Left ventricle myocardium inferior (tissue), 1 donor: ENCODE measurements at regions of chr3 and their contacts with region 1.

Region 1: DNA sequence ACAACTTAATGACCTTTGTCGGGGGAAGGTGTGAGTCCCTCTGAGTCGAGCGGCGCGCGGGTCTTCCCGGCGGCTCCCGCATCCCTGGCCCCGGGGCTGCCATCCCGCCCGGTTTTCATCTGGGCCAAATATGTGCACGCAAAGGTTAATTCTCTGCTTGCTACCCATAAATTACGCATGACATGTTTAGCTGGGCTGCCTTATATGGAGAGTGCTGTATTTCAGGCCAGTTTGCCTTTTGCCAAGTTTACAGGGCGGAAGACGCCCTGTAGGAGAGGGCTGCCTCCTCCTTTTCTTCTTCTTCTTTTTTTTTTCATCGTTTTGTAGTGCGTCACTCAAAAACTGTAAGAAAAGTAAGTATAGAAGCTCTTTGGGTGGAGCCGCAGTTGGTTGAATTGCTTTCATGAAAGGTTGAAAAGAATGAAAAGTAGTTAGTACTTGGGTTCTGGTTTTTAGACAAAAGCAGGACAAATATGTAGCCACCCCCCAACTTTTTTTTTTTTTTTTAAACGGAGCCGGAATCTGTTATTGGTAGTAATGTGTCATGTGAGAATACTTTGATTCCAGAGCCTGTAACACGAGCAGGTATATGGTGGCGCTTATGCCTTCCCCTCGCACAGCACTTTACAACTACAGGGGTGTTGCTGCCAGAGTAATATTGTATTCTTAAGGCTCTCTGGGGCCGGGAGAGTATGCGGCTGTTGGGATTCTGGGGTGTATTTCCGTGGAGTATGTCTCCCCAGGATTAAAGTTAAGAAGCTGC is 878 bp downstream of the MBNL1 start:
- DNase-seq: no peak
- H3K4me3 ChIP-seq: peak overlapping the region; percentile 90
- H3K27ac ChIP-seq: peak overlapping the region; percentile 99
- H3K4me1 ChIP-seq: peaks cover 88% of the 10 kb centered on the region
- H3K27me3 ChIP-seq: no peaks in the 10 kb centered on the region
- CTCF ChIP-seq: no peak

Region 2: GRCh38 chr3:152100491-152101132 is 169.0 kb before region 1 on chr3:
- intact Hi-C with region 1: no loop called
- DNase-seq: no peak
- H3K4me3 ChIP-seq: no peak overlapping the region
- H3K27ac ChIP-seq: no peak overlapping the region
- H3K4me1 ChIP-seq: no peaks in the 10 kb centered on the region
- H3K27me3 ChIP-seq: no peaks in the 10 kb centered on the region
- CTCF ChIP-seq: no peak

Region 3: GRCh38 chr3:152121292-152121654 is 148.3 kb before region 1 on chr3:
- intact Hi-C with region 1: no loop called
- DNase-seq: no peak
- H3K4me3 ChIP-seq: no peak overlapping the region
- H3K27ac ChIP-seq: peak overlapping the region; percentile 15
- H3K4me1 ChIP-seq: no peaks in the 10 kb centered on the region
- H3K27me3 ChIP-seq: no peaks in the 10 kb centered on the region
- CTCF ChIP-seq: no peak

Region 4: GRCh38 chr3:152159328-152159727 is 110.3 kb before region 1 on chr3:
- intact Hi-C with region 1: no loop called
- DNase-seq: no peak
- H3K4me3 ChIP-seq: no peak overlapping the region
- H3K27ac ChIP-seq: no peak overlapping the region
- H3K4me1 ChIP-seq: no peaks in the 10 kb centered on the region
- H3K27me3 ChIP-seq: no peaks in the 10 kb centered on the region
- CTCF ChIP-seq: no peak

Region 5: DNA sequence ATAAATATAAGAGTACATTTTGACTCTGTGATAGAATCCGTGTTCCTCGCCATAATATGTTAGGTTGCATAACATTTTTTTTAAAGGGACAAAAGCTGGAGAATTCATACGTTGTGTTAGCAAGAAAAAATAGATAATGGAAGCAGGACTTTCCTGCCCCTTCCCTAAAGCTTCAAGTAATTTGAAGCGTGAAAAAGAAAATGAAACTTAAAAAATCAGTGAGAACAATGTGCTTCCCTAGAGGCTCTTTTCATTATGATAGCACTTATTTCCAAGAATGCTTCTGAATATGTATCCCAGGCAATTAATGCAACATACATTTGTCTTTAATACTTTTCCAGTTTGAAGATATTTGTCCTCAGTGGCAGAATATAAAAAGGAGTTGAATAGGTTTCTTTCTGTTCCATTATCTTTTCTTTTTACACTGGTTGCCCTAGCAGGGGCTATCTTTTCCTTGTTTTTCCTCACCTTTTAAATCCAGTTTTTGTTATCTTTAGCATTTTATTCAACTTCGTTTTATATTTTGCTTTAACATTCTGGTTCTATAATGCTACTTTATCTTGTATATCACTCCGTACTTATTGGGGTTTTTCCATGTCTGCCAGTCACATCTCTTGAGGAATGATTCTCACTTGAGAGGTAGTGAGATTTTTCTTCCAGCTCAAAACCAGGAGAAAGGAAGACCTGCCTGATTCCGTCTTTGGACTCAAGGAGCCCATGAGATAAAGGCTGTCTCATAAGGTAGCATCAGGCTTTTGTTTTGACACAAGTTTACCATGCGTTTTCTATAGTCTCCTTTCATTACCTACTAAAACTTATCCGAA is 112.9 kb after region 1 on chr3:
- intact Hi-C with region 1: loop called (anchors 10 kb)
- DNase-seq: no peak
- H3K4me3 ChIP-seq: peak overlapping the region; percentile 53
- H3K27ac ChIP-seq: peak overlapping the region; percentile 77
- H3K4me1 ChIP-seq: peaks cover 98% of the 10 kb centered on the region
- H3K27me3 ChIP-seq: no peaks in the 10 kb centered on the region
- CTCF ChIP-seq: no peak

Region 6: DNA sequence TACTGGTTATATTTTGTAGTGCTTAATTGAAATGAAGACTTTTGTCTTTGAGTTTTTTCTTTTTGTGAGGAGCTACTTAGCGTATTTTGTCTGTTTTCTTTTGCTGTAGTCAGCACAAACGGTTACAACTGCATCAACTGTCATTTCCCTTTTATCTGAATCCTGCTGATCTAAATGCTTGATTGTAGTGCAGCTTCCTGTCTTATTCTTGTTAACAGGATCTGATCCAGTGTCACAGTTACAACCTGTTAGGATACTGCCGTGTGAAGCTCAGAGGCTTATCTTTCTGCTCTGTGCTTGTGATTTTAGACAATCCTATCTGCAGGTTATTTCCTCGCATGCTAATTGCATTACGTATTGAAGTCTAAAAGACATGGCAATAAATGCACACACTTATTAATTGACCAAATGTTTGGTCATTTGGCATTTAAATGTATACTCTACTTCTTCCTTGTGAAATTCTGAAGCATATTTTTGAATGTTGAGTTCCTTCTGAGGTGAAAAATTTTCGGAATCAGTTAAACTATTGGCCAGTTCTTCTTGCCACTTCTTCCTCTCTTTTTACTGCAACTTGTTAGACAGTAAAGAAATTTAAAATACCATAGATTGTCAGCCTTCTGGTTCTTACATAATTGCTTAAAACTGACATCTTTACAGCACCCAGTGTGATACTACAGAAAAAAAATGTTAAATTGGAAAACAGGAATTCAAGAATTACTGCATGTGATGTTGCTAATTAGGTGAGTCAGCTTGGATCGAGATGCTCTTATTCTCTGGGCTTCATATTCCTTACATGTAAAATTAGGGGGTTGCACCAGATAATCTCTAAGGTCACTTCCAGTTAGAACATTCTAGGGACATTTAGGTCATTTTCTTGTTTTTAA is 167.3 kb after region 1 on chr3:
- intact Hi-C with region 1: loop called (anchors 10 kb)
- DNase-seq: no peak
- H3K4me3 ChIP-seq: no peak overlapping the region
- H3K27ac ChIP-seq: peak overlapping the region; percentile 49
- H3K4me1 ChIP-seq: peaks cover 62% of the 10 kb centered on the region
- H3K27me3 ChIP-seq: no peaks in the 10 kb centered on the region
- CTCF ChIP-seq: no peak